ENCODE measurements at regions of chr4 and their contacts with region 1.

Region 1: GRCh38 chr4:145819853-145820181 is 118.8 kb downstream of the ZNF827 start:
- DNase-seq: no peak
- H3K4me3 Mint-ChIP-seq: no peak overlapping the region
- H3K27ac Mint-ChIP-seq: no peak overlapping the region
- H3K4me1 Mint-ChIP-seq: peaks cover 53% of the 10 kb centered on the region
- H3K27me3 Mint-ChIP-seq: no peaks in the 10 kb centered on the region

Region 2: DNA sequence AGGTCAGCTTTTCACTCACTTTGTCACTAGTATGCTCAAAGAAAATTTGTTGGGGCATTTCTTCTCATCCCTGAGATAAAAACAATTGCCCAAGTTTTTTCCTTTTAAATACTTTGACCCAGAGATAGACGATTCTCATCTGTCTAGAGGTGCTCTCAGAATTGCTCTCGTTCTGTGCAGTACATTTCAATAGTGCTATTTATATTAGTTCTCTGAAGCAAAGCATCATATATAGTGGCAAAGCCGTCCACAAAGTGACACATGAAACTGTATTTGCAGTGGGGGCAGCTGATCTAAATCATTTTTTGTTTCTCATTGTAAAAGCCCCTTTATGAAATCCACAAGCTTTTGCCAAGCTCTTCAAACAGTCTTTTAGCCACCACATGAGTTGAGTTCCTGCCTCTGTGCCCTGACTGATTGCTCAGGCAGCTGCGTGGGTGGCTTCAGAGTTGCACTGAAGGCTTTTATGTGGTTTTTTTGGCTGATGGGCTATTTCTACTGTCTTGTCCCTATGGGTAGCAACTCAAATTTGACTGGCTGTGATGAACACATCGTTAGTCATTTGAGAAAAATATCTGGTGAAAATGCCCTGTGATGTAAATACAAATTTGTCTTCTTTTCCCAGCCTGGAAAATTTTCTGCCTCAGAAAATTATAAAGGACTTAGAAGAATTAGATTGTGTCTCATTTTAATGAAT is 520.3 kb before region 1 on chr4:
- intact Hi-C with region 1: loop called (anchors 10 kb)
- DNase-seq: peak; percentile 21
- H3K4me3 Mint-ChIP-seq: no peak overlapping the region
- H3K27ac Mint-ChIP-seq: peak overlapping the region; percentile 53
- H3K4me1 Mint-ChIP-seq: peaks cover 14% of the 10 kb centered on the region
- H3K27me3 Mint-ChIP-seq: peaks cover 21% of the 10 kb centered on the region

Region 3: DNA sequence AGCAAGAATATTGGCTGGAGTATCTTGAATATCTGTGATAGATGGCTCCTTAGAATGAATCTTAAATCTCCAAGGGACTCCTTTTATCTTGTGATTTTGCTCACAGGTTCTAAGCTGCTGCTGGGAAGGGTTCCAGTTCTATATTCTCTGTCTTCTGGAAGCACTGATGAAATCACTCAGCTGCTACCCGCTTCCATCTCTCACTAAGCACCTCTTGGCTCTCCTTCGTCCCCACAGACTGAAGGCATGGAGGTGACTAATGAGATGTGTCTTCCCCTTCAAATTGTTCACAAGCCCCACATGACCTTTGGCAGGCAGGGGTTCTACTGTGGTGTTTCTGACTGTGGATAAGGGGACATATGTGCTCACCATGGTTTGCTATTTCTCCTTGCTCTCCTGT is 64.0 kb before region 1 on chr4:
- intact Hi-C with region 1: no loop called
- DNase-seq: no peak
- H3K4me3 Mint-ChIP-seq: no peak overlapping the region
- H3K27ac Mint-ChIP-seq: peak overlapping the region; percentile 86
- H3K4me1 Mint-ChIP-seq: peaks cover 39% of the 10 kb centered on the region
- H3K27me3 Mint-ChIP-seq: no peaks in the 10 kb centered on the region

Region 4: DNA sequence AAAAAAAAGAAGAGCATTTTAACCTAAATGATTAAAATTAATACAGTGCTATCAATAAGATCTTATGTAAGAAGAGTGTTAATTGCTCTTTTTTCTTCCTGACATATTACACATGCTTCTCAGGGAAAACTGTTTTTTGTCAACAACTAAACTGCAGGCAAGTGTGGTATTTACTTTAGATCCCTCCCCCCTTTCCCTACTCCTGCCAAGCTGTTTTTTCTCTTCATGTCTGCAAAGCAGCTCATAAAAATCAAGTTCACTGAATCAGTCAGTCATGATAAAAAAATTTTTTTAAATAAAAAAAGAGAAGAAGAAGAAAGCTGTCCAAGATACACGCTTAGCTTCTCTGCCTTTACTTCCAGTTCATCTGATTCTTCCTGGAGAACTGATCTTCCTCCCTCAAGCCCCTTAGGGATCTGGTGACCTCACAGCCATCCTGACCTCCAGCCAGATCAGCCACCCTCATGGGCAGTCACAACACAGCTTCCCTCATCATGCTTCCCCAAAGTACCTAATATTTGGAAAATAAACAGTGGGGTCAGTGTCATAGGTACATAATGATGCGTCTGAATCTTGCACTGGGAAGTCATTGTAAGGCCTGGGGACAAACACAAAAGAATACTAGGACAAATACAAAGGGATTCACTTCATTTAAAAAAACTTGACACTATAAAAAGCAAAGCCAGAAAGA is 31.8 kb after region 1 on chr4:
- intact Hi-C with region 1: no loop called
- DNase-seq: no peak
- H3K4me3 Mint-ChIP-seq: no peak overlapping the region
- H3K27ac Mint-ChIP-seq: no peak overlapping the region
- H3K4me1 Mint-ChIP-seq: peaks cover 8% of the 10 kb centered on the region
- H3K27me3 Mint-ChIP-seq: no peaks in the 10 kb centered on the region

Measured in activated T-helper 2 cell treated with anti-CD3 and anti-CD28 coated beads, Interferon-gamma antibody, Interleukin-2, Interleukin-4, amounts not matched to agents 10 μg/mL and 5 μg/mL and 100 μg/mL, durations not matched to agents 14 hours and 24 hours and 36 hours (primary cell).